ENCODE measurements at regions of chr13 and their contacts with region 1.

Region 1: DNA sequence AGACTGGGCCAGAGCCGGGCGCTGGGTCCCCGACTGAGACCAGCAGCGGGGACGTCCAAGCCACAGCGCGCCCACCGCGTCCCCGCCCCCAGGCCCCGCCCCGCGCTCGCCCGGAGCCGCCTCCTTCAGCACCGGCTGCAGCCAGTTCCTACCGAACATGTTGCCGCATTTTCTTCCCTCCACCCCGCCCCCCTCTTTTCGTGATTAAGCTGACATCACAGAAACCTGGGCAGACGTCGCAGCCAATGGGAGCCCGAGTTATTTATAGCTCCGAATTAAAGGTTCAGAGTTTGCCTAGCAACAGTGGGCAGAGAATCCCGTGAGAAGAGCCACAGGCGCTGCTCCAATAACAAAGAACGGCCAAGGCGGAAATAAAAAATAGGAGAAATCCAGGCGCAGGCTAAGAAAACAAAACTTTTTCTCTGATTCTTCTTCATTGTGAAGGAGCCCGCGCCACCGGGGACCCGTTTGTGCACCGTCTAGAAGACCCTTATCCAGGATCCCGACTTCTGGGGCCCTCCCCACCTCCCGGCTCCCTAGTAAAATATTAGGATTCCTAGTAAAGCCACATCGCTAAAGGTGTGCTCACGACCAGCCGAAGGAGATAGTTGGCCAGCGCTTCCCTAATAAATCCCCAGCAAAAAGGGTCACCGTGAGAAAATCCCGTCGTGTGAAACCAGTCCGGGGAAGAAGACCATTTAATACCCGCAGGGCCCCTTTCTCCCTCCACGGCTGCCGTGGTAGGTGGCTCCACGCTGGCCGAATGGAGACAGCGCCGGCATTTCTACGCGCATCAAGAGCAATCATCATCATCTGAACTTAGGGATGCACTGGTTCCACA is 61.7 kb downstream of the SERP2 start:
- DNase-seq: peak; percentile 87
- CTCF ChIP-seq: no peak

Region 2: GRCh38 chr13:43905435-43906031 is 529.8 kb before region 1 on chr13:
- in situ Hi-C with region 1: loop called (anchors 10 kb)
- DNase-seq: peak; percentile 59
- CTCF ChIP-seq: peak; percentile 52

Region 3: DNA sequence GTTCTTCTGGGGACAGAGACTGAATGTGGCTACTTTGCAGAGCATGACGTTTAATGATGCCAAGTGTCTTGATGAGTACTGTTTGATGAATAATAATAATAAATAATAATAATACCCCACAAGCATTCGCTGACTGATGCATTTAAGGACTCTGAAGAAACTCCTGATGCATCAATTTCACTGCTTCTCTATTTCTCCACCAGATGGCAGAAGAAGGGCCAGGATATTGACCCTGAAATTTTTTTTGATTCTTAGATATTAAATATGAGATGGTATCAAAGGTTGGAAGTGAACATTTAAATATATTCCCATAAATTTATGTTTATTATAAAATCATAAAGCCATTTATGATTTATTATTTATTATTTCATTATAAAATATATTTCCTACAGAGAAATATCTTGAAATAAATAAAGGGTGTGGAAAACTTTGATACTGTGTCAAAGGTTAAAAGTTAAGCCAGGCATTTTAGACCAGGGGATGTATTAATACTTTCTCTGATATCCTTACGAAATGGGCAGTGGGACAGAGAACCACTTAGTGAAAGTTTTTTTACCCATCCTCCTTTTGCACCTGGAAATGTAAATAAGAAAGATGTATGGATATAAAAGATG is 384.8 kb before region 1 on chr13:
- in situ Hi-C with region 1: loop called (anchors 5 kb)
- DNase-seq: peak; percentile 20
- CTCF ChIP-seq: peak; percentile 51

Region 4: DNA sequence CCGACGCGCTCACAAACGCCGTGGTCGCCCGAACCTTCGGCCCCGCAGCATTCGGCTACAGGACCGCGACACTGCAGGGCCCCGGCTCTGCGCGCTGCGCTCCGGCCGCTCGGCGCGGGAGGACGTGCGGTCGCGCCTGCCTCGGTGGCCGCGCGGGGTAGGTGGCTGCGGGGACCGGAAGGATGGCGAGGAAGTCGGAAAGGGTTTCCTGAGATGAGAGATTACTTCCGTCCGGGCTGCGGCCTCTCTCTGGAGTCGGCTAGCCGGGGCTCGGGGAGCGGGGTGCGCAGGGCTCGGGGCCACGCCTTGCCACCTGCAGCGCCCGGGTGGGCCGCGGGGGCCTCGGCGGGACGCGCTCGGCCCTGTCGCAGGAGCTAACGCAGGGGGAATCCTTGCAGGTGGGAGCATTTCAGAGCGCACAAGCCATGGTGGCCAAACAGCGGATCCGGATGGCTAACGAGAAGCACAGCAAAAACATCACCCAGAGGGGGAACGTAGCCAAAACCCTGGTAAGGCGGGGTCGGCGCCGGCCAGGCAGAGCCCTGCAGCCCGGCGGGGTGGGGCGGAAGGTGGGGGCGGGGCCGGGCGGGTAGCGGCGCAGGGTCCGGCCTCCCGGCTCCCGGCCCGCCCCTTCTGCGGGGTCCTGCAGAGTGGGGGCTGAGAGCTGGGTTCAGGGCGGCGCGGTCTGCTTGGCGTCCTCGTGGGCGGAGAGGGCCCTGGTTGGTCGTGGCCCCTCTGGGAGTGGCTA is 61.6 kb before region 1 on chr13 and contains the start of gene SERP2:
- in situ Hi-C with region 1: no loop called
- DNase-seq: no peak
- CTCF ChIP-seq: no peak

Measured in GM13976 (cell line).